Breast epithelium (tissue), 4 donors: ENCODE measurements at regions of chr13 and their contacts with region 1.

Region 1: DNA sequence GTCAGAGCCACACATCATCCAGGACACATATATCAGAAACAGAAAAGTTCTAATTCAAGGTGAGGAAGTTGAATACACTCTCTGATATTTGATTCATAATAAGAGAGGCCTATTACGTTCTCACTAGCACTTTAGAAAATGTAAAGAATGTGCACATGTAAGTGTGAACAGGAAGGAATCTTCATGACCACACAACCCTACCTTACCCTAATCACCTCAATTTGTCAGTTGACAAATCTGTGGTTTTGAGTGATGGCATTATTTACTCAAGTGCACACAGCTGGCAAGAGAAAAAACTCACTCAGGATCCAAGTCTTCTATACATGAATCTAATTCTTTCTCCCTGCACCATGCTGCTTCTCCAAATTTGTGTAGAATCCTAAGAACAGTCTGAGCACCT is 445.8 kb downstream of the SUCLA2 start:
- DNase-seq: no peak
- H3K4me3 ChIP-seq: no peak overlapping the region
- H3K27ac ChIP-seq: no peak overlapping the region
- H3K4me1 ChIP-seq: no peaks in the 10 kb centered on the region
- H3K27me3 ChIP-seq: no peaks in the 10 kb centered on the region
- CTCF ChIP-seq: no peak
- POLR2A ChIP-seq: no peak

Region 2: GRCh38 chr13:46983881-46984280 is 571.4 kb before region 1 on chr13:
- intact Hi-C with region 1: no loop called
- DNase-seq: no peak
- H3K4me3 ChIP-seq: no peak overlapping the region
- H3K27ac ChIP-seq: no peak overlapping the region
- H3K4me1 ChIP-seq: no peaks in the 10 kb centered on the region
- H3K27me3 ChIP-seq: no peaks in the 10 kb centered on the region
- CTCF ChIP-seq: no peak
- POLR2A ChIP-seq: no peak

Region 3: GRCh38 chr13:47215741-47216140 is 339.5 kb before region 1 on chr13:
- intact Hi-C with region 1: no loop called
- DNase-seq: no peak
- H3K4me3 ChIP-seq: no peak overlapping the region
- H3K27ac ChIP-seq: no peak overlapping the region
- H3K4me1 ChIP-seq: no peaks in the 10 kb centered on the region
- H3K27me3 ChIP-seq: no peaks in the 10 kb centered on the region
- CTCF ChIP-seq: no peak
- POLR2A ChIP-seq: no peak

Region 4: DNA sequence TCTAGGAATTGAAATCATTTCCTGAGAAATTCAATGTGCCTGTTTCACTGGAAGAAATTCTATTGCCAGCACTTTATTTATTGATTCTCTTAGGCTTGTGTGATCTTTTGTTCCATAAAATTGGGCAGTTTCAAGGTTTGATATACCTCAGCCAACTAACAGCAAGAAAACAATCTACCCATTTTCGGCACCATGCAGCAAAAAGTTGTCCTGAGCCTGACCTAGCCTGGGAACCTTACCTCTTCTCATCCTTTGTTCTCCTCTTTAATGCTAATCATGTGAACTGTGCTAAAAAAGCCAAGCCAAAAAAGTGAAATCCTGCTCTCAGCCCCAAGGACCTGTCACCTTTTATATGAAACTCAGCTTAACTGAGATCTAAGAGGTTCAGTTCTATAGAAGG is 31.5 kb before region 1 on chr13:
- intact Hi-C with region 1: loop called (anchors 2 kb)
- DNase-seq: no peak
- H3K4me3 ChIP-seq: no peak overlapping the region
- H3K27ac ChIP-seq: no peak overlapping the region
- H3K4me1 ChIP-seq: no peaks in the 10 kb centered on the region
- H3K27me3 ChIP-seq: no peaks in the 10 kb centered on the region
- CTCF ChIP-seq: no peak
- POLR2A ChIP-seq: no peak